HEK293T (cell line): ENCODE measurements at regions of chr14 and their contacts with region 1.

Region 1: GRCh38 chr14:74784634-74785033 is 21.5 kb downstream of the YLPM1 start:
- DNase-seq: no peak

Region 2: GRCh38 chr14:74762917-74763802 is 21.5 kb before region 1 on chr14 and contains the start of gene YLPM1:
- CTCF ChIA-PET with region 1: no interaction called
- POLR2A ChIA-PET with region 1: interaction called, 12 read pairs
- DNase-seq: peak; percentile 94

Region 3: DNA sequence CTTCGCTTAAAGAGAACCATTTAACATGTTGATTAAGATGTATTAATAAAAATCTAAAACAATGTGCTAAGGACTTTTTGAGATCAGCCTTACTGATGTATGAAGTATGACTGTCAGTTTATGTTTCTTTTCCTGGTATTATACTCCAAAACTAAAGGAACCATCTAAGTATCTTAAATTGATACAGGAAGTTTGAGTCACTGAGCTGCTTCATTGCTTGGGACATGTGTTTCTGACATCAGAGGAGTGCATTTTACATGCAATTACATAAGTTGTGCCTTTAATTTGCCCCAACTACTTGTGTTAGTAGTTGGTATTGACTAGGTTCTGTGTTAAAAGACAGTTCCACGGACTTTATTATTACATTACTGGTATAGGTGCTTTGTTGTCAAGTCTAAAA is 40.4 kb after region 1 on chr14:
- CTCF ChIA-PET with region 1: no interaction called
- POLR2A ChIA-PET with region 1: no interaction called
- DNase-seq: no peak

Region 4: DNA sequence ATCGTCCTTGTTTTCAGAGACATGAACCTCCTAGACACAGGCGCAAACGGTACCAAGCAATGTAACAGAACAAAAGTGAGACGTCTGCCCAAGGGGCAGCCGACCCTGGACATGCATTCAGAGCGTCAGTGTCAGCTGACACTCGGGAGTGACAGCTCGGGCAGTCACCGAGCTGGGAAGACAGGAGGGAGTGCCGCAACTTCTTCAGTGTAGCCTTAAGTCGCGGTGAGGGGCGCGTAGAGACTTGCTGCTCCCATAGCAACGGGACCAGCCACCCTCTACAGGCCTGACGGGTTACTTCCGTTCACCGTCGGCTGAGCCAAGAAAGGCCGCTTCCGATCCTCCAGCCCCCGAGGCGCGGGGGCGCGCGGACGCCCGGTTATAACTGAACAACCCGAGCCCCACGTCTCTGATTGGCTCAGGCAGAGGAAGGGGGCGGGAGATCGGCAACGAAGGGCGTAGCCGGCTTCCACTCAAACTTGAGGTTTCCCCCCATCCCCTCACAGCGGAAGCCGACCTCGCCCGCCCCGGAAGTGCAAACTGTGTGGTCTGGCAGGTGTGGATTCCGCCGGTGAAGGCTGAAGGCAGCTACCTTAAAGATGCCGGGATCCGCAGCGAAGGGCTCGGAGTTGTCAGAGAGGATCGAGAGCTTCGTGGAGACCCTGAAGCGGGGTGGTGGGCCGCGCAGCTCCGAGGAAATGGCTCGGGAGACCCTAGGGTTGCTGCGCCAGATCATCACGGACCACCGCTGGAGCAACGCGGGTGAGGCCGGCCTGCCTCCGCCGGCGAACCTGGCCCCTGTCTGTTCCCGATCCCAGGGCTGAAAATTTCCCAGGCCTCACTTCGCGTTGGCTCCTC is 218.0 kb after region 1 on chr14 and contains the start of gene EIF2B2:
- CTCF ChIA-PET with region 1: no interaction called
- POLR2A ChIA-PET with region 1: no interaction called
- DNase-seq: peak; percentile 97